Transverse colon (tissue), 4 donors: ENCODE measurements at regions of chr19 and their contacts with region 1.

Region 1: GRCh38 chr19:51473009-51473707 is 5.2 kb upstream of the CEACAM18 start:
- DNase-seq: peak; percentile 78
- H3K4me3 ChIP-seq: no peak overlapping the region
- H3K27ac ChIP-seq: no peak overlapping the region
- H3K4me1 ChIP-seq: peaks cover 0 to under 1% (median 0%) of the 10 kb centered on the region in 4 donors
- H3K27me3 ChIP-seq: peaks cover 6% of the 10 kb centered on the region
- CTCF ChIP-seq: peak; percentile 67 to 87 (median 84)
- EP300 ChIP-seq: no peak
- POLR2A ChIP-seq: no peak

Region 2: GRCh38 chr19:51651216-51651846 is 178.2 kb after region 1 on chr19:
- in situ Hi-C with region 1: loop called (anchors 5 to 25 kb)
- intact Hi-C with region 1: loop called (anchors 10 kb)
- DNase-seq: no peak
- H3K4me3 ChIP-seq: no peak overlapping the region
- H3K27ac ChIP-seq: no peak overlapping the region
- H3K4me1 ChIP-seq: no peaks in the 10 kb centered on the region
- H3K27me3 ChIP-seq: no peaks in the 10 kb centered on the region
- CTCF ChIP-seq: no peak
- EP300 ChIP-seq: no peak
- POLR2A ChIP-seq: no peak

Region 3: GRCh38 chr19:51777570-51778462 is 304.7 kb after region 1 on chr19:
- in situ Hi-C with region 1: loop called in 1 of 4 experiments (anchors 25 kb)
- intact Hi-C with region 1: loop called (anchors 10 kb)
- DNase-seq: peak; percentile 56
- H3K4me3 ChIP-seq: no peak overlapping the region
- H3K27ac ChIP-seq: no peak overlapping the region
- H3K4me1 ChIP-seq: peaks cover 0 to 6% (median 0%) of the 10 kb centered on the region in 4 donors
- H3K27me3 ChIP-seq: no peaks in the 10 kb centered on the region
- CTCF ChIP-seq: peak; percentile 56 to 69 (median 65)
- EP300 ChIP-seq: no peak
- POLR2A ChIP-seq: no peak